ENCODE measurements at regions of chr16 and their contacts with region 1.

Region 1: GRCh38 chr16:73878611-73879010 is 418.0 kb upstream of the PSMD7 start:
- DNase-seq: no peak
- ATAC-seq: no peak

Region 2: GRCh38 chr16:72124761-72125634 is 1753.6 kb before region 1 on chr16:
- intact Hi-C with region 1: loop called (anchors 5 kb)
- DNase-seq: peak; percentile 72
- ATAC-seq: peak; percentile 83

Region 3: GRCh38 chr16:72501739-72502593 is 1376.6 kb before region 1 on chr16:
- intact Hi-C with region 1: loop called (anchors 10 kb)
- DNase-seq: no peak
- ATAC-seq: peak; percentile 50

Region 4: DNA sequence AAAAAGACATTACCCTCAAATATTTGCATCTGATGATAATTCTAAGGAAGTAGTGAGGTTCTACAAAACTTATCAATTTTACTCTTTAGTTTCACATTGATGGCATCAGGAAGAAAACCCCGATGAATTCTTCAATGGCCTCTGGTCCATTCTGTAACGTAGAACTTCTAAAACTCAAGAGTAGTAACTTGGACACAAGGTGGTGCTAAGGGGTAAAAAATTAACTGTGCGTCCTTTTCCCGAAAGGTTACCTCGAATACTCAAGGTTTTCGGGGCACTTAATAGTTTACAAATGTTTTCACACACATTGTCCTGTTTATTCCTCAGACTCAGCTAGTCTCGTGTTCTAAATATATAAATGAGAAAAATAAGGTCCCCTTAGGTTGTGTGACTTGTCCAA is 313.3 kb before region 1 on chr16:
- intact Hi-C with region 1: loop called (anchors 5 kb)
- DNase-seq: no peak
- ATAC-seq: no peak

Region 5: GRCh38 chr16:73713778-73714495 is 164.7 kb before region 1 on chr16:
- intact Hi-C with region 1: loop called (anchors 10 kb)
- DNase-seq: no peak
- ATAC-seq: no peak

Region 6: DNA sequence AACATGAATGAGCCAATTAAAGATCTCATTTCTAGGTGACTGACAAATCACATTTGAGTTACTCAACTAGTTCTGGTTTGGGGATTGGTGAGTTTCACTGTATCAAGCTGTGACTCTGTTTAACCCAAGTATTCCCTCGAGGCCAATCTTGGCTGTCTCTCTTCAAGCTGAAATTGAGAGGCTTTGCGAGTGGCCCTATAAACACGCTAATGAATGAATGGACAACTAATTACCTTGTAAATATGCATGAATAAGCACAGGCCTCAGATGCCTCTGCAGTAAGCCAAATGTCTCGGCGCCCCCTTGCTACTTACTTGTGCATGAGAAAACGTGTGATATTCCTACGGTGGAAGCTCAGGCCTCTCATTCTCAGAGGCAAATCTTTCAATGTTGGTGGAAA is 32.3 kb before region 1 on chr16:
- intact Hi-C with region 1: no loop called
- DNase-seq: no peak
- ATAC-seq: no peak